ENCODE measurements at regions of chr20 and their contacts with region 1.

Region 1: GRCh38 chr20:21529863-21530262 is 16.0 kb upstream of the NKX2-2 start:
- DNase-seq: no peak
- H3K4me3 Mint-ChIP-seq: no peak overlapping the region
- H3K27ac Mint-ChIP-seq: no peak overlapping the region
- H3K4me1 Mint-ChIP-seq: peaks cover 6% of the 10 kb centered on the region
- H3K27me3 Mint-ChIP-seq: peaks cover 37% of the 10 kb centered on the region

Region 2: DNA sequence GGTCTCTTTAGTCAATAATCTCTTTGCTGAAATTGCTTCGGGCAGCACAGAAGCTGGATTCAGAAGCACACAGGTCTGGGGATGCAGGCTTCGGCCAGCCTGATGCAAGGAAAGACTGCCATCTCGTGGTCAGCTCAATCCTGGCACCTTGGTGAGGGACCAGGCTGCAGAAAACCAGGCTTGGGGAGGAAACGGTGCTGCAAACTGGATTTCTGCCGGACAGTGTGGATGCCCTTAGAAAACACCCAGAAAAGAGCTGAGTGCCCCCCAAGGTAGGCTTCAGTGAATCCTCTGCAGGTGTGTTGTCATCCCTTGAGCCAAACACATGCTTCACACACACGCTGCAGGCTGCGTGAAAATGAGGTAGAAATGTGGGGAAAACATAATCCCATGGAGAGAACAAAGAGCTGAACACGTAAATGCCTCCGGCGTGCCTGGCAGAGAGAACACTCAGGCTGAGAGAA is 85.8 kb after region 1 on chr20:
- intact Hi-C with region 1: loop called (anchors 1 kb)
- DNase-seq: peak; percentile 10
- H3K4me3 Mint-ChIP-seq: no peak overlapping the region
- H3K27ac Mint-ChIP-seq: no peak overlapping the region
- H3K4me1 Mint-ChIP-seq: peaks cover 6% of the 10 kb centered on the region
- H3K27me3 Mint-ChIP-seq: no peaks in the 10 kb centered on the region

Measured in activated T-helper 1 cell treated with anti-CD3 and anti-CD28 coated beads, Interleukin-12 subunit alpha, Interleukin-12 subunit beta, Interleukin-2, Interleukin-4 antibody, amounts not matched to agents 30 ng/mL and 10 ng/mL and 1 ng/mL, durations not matched to agents 14 hours and 24 hours and 36 hours (primary cell).